ENCODE measurements at regions of chr14 and their contacts with region 1.

Region 1: GRCh38 chr14:73125169-73125588 is 11.1 kb upstream of the PSEN1 start:
- DNase-seq: no peak
- ATAC-seq: peak; percentile 41
- H3K4me3 Mint-ChIP-seq: peak overlapping the region; percentile 5; the same call in 1 of the 2 replicates
- H3K27ac Mint-ChIP-seq: peak overlapping the region; percentile 86
- H3K4me1 Mint-ChIP-seq: peaks cover 46% of the 10 kb centered on the region
- H3K27me3 Mint-ChIP-seq: peaks cover 24% of the 10 kb centered on the region
- CTCF ChIP-seq: no peak

Region 2: GRCh38 chr14:73097421-73097820 is 27.8 kb before region 1 on chr14:
- CTCF ChIA-PET with region 1: no interaction called
- POLR2A ChIA-PET with region 1: no interaction called
- DNase-seq: no peak
- ATAC-seq: no peak
- H3K4me3 Mint-ChIP-seq: no peak overlapping the region
- H3K27ac Mint-ChIP-seq: peak overlapping the region; percentile 74
- H3K4me1 Mint-ChIP-seq: peaks cover 12% of the 10 kb centered on the region
- H3K27me3 Mint-ChIP-seq: no peaks in the 10 kb centered on the region
- CTCF ChIP-seq: no peak

Region 3: GRCh38 chr14:73136387-73137225 is 11.4 kb after region 1 on chr14 and contains the start of gene PSEN1:
- CTCF ChIA-PET with region 1: interaction called, 7 read pairs
- POLR2A ChIA-PET with region 1: interaction called, 10 read pairs
- DNase-seq: peak; percentile 99
- ATAC-seq: peak; percentile 96
- H3K4me3 Mint-ChIP-seq: peak within 1 kb of the TSS; percentile 85
- H3K27ac Mint-ChIP-seq: peak within 1 kb of the TSS; percentile 93
- H3K4me1 Mint-ChIP-seq: peaks cover 11% of the 10 kb centered on the region
- H3K27me3 Mint-ChIP-seq: peaks cover 16% of the 10 kb centered on the region
- CTCF ChIP-seq: no peak
- total RNA-seq, gene PSEN1: 26.6 to 31.6 TPM (median 27.2 TPM) in 3 replicates